Posterior vena cava (tissue), 2 donors: ENCODE measurements at regions of chr1 and their contacts with region 1.

Region 1: DNA sequence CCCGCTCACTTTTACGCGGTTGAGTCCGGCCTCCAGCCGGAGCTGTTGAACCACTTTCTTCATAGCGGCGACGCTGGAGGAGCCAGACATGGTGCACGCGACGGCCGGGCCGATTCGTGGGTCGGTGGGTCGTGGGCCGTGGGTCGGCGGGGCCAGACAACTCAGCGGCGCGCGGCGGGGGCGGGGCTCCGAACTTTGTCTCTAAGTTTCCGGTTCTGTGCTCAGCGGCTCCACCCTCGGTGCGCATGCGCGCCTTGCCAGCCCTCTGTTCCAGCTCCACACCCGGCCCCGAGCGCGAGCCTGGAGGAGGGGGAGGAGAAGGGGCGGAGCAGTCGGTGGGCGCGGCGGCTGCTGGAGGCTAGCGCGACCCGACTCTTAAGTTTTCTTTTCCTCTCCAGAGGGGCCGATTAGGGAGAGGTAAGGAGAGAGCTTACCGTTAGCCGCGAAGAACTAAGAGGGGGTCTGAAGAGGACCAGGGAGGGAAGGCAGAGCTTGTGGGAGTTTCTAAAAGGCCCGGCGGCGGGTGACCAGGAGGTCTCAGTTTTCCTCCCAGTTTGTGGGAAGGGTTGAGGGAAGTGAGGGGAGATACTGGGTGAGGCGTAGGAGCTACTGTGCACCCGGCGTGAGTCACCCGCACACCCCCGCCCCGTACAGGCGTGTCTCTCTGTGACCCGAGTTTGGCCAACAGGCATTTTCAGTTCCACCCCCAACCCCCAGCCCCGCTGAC is at the starts of genes GNG5 and SPATA1:
- DNase-seq: peak; percentile 100
- total RNA-seq, gene GNG5: 66.1 to 67.7 TPM
- total RNA-seq, gene SPATA1: 1.0 to 2.6 TPM

Region 2: GRCh38 chr1:84573967-84574842 is 68.0 kb after region 1 on chr1 and contains the start of gene CTBS:
- intact Hi-C with region 1: loop called in 1 of 2 experiments (anchors 10 kb)
- DNase-seq: peak; percentile 97
- total RNA-seq, gene CTBS: 20.5 to 23.5 TPM

Region 3: DNA sequence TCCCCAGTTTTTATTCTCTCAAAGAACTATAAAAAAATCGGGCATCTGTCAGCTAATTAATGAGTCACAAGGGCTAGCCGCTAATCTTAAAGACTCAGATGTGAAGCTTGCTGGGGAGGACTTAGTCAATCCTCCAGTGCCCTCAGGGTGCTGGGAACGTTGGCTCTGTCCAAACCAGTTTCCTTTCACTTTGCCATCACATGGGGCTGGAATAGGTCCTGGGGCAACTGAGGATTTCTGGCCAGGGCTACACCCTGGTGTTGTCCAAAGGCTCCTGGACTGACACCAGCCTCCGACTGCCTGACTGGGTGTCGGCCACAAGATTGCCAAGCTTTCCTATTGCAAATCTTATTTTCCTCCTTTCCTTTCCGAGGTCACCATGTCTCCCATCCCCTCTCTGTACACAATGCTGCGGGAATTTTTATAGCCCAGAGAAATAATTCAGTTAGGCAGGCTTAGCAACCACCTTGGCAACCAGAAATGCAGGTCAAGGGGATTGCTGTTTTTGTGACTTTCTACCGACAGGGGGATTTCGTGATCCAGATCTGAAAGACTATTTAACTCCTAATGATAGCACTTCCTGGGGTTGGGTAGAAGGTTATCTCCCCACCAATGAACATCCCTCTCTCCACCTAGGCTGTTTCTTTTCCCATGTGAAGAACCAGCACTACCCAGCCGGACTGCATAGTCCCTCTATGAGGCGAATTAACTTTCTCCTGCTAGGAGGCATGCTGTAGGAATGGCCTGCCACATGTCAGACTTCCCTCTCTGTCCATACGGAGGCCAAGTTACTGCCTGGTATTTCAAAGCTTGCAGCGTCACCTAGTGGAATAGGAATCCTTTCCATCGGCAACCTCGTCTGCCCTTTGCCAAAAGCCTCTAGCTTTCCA is 98.0 kb after region 1 on chr1:
- intact Hi-C with region 1: no loop called
- DNase-seq: peak; percentile 81